Head of caudate nucleus (tissue), 42 donors: ENCODE measurements at regions of chr6 and their contacts with region 1.

Region 1: GRCh38 chr6:157323255-157323965 is at the start of gene TMEM242:
- DNase-seq: peak; percentile 81 to 97 (median 92)

Region 2: GRCh38 chr6:157379656-157380454 is 56.4 kb after region 1 on chr6:
- intact Hi-C with region 1: loop called (anchors 2 kb)
- DNase-seq: peak; percentile 84 to 99 (median 95)

Region 3: DNA sequence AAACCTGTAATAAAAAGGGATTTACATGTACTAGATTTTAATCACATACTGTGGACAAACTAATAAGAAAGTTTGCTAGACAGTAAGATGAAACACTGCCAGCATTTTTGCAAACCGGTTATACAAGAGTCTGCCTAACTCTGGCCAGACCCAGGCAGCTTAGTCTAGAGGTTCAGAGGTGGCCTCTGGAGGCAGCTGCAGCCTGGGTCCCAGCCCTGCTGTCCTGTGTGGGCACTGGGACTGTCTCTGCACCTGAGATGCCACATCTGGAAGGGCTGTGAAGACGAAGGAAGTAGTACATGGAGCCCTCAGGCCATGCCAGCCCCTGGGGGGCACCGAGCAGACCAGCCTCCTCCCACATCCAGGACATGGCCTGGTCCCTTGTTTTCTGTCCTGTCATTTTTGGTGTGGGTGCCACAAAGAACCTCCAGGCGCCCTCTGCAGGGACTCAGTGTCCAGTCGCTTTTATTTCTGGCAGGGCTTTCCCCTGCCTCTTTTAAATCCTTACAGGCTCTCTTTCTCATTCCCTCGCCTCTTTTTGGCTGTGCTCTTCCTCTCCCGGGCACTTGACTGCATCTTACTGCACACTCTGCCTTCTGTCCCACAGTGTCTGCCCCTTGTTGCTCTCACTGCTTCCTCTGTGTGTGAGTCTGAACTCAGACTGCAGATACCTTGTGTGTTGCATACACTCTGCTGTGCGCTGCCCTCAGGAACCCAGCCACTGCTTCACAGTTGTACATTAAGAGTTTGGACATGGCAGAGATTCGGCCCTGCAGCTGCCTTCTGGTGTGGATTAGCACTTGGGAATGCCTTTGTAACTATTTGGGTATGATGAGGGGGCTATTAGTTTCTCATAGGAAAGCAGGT is 274.3 kb after region 1 on chr6:
- intact Hi-C with region 1: loop called (anchors 10 kb)
- DNase-seq: peak in 36 of 42 donors; percentile 11 to 80 (median 46)

Region 4: GRCh38 chr6:157667211-157668008 is 344.0 kb after region 1 on chr6:
- intact Hi-C with region 1: loop called (anchors 5 kb)
- DNase-seq: peak in 40 of 42 donors; percentile 16 to 89 (median 70)